ENCODE measurements at regions of chr5 and their contacts with region 1.

Region 1: GRCh38 chr5:122515709-122516431 is 203.8 kb downstream of the SNCAIP start:
- DNase-seq: peak; percentile 56
- ATAC-seq: peak; percentile 100
- H3K4me3 ChIP-seq: peak overlapping the region in 2 of 3 experiments; percentile 25 to 32; a peak in 4 of 6 replicates
- H3K27ac ChIP-seq: no peak overlapping the region
- H3K4me1 ChIP-seq: peaks cover 5% of the 10 kb centered on the region; the same call in 1 of the 2 replicates
- H3K27me3 ChIP-seq: no peaks in the 10 kb centered on the region
- CTCF ChIP-seq: peak; percentile 85
- EP300 ChIP-seq: no peak
- POLR2A ChIP-seq: no peak
- RAD21 ChIP-seq: peak; percentile 84

Region 2: GRCh38 chr5:122163121-122164069 is 352.5 kb before region 1 on chr5:
- CTCF ChIA-PET with region 1: no interaction called
- POLR2A ChIA-PET with region 1: no interaction called
- in situ Hi-C with region 1: no loop called
- intact Hi-C with region 1: no loop called
- DNase-seq: no peak
- ATAC-seq: no peak
- H3K4me3 ChIP-seq: no peak overlapping the region
- H3K27ac ChIP-seq: no peak overlapping the region
- H3K4me1 ChIP-seq: peaks cover 18% of the 10 kb centered on the region
- H3K27me3 ChIP-seq: no peaks in the 10 kb centered on the region
- CTCF ChIP-seq: no peak
- EP300 ChIP-seq: no peak
- POLR2A ChIP-seq: no peak
- RAD21 ChIP-seq: no peak

Region 3: DNA sequence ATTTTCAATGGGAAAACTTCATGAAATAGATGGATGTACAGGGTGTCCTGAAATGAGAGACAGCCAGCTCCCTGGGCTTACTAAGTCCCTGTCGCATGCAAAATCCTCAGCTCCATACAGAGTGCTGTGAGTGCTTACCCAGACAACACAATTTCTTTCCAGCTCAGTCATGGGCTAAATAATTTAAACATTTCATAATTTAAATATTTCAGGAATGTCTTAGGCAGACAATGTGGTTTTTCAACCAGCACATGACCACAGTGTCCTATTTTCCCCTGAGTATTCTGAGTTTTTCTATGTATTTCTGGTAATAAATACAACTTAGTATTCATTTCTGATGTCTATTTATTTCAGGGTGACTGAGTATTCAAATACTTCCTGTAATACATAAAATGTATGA is 70.5 kb after region 1 on chr5:
- CTCF ChIA-PET with region 1: no interaction called
- POLR2A ChIA-PET with region 1: no interaction called
- in situ Hi-C with region 1: no loop called
- intact Hi-C with region 1: no loop called
- DNase-seq: no peak
- ATAC-seq: no peak
- H3K4me3 ChIP-seq: no peak overlapping the region
- H3K27ac ChIP-seq: no peak overlapping the region
- H3K4me1 ChIP-seq: no peaks in the 10 kb centered on the region
- H3K27me3 ChIP-seq: peaks cover 0 to 3% of the 10 kb centered on the region in 2 experiments; a peak in 1 of 5 replicates
- CTCF ChIP-seq: no peak
- EP300 ChIP-seq: no peak
- POLR2A ChIP-seq: no peak
- RAD21 ChIP-seq: no peak

Region 4: GRCh38 chr5:123036391-123037103 is 520.7 kb after region 1 on chr5 and contains the start of gene PPIC:
- CTCF ChIA-PET with region 1: no interaction called
- POLR2A ChIA-PET with region 1: no interaction called
- in situ Hi-C with region 1: no loop called
- intact Hi-C with region 1: loop called (anchors 2 kb)
- DNase-seq: peak; percentile 50
- ATAC-seq: peak; percentile 90
- H3K4me3 ChIP-seq: peak within 1 kb of the TSS; percentile 69 to 77 (median 73)
- H3K27ac ChIP-seq: no peak within 1 kb of the TSS
- H3K4me1 ChIP-seq: peaks cover 21% of the 10 kb centered on the region
- H3K27me3 ChIP-seq: no peaks in the 10 kb centered on the region
- CTCF ChIP-seq: no peak
- EP300 ChIP-seq: no peak
- POLR2A ChIP-seq: no peak
- RAD21 ChIP-seq: no peak; the same call in 1 of the 2 replicates
- total RNA-seq, gene PPIC: 9.9 and 17.2 TPM in 2 replicates

Region 5: GRCh38 chr5:123119334-123119986 is 603.6 kb after region 1 on chr5:
- CTCF ChIA-PET with region 1: no interaction called
- POLR2A ChIA-PET with region 1: no interaction called
- in situ Hi-C with region 1: no loop called
- intact Hi-C with region 1: loop called (anchors 1 kb)
- DNase-seq: peak; percentile 17
- ATAC-seq: peak; percentile 93
- H3K4me3 ChIP-seq: no peak overlapping the region
- H3K27ac ChIP-seq: no peak overlapping the region
- H3K4me1 ChIP-seq: no peaks in the 10 kb centered on the region
- H3K27me3 ChIP-seq: 0 out of 5 replicates have a peak, but pooled peaks cover 0 to 8% of the 10 kb centered on the region in 2 experiments
- CTCF ChIP-seq: peak; percentile 56
- EP300 ChIP-seq: no peak
- POLR2A ChIP-seq: no peak
- RAD21 ChIP-seq: no peak

Region 6: GRCh38 chr5:123371575-123372179 is 855.8 kb after region 1 on chr5:
- CTCF ChIA-PET with region 1: interaction called, 5 read pairs
- POLR2A ChIA-PET with region 1: no interaction called
- in situ Hi-C with region 1: loop called (anchors 5 kb)
- intact Hi-C with region 1: loop called (anchors 1 kb)
- DNase-seq: peak; percentile 22
- ATAC-seq: peak; percentile 75
- H3K4me3 ChIP-seq: no peak overlapping the region
- H3K27ac ChIP-seq: no peak overlapping the region
- H3K4me1 ChIP-seq: no peaks in the 10 kb centered on the region
- H3K27me3 ChIP-seq: no peaks in the 10 kb centered on the region
- CTCF ChIP-seq: peak; percentile 59
- EP300 ChIP-seq: no peak
- POLR2A ChIP-seq: no peak
- RAD21 ChIP-seq: no peak

Region 7: GRCh38 chr5:123610665-123611405 is 1095.0 kb after region 1 on chr5:
- CTCF ChIA-PET with region 1: no interaction called
- POLR2A ChIA-PET with region 1: no interaction called
- in situ Hi-C with region 1: loop called (anchors 25 kb)
- intact Hi-C with region 1: loop called (anchors 2 kb)
- DNase-seq: peak; percentile 54
- ATAC-seq: peak; percentile 61
- H3K4me3 ChIP-seq: no peak overlapping the region
- H3K27ac ChIP-seq: no peak overlapping the region
- H3K4me1 ChIP-seq: no peaks in the 10 kb centered on the region
- H3K27me3 ChIP-seq: no peaks in the 10 kb centered on the region
- CTCF ChIP-seq: peak; percentile 76
- EP300 ChIP-seq: no peak
- POLR2A ChIP-seq: no peak
- RAD21 ChIP-seq: peak; percentile 76

Measured in HepG2 (cell line).